ENCODE measurements at regions of chr2 and their contacts with region 1.

Region 1: DNA sequence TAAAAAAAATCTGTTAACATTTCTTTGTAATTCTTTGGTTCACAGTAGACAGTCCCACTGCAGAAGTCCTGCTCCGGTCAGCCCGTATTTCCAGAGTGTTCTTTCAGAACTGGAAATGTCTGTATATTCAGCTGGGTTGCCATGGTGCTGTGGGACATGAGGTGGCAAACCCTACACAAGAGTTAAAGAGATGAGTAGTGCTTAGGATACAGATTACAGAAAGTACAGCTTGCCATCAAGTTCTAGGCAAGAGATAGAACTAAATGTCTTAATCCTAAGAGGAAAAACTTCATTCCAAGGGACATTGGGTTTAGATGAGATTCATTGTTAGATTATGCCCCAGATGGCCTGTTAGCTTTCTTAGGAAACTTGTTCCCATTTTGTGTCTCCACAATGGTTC is 60.1 kb downstream of the FMNL2 start:
- DNase-seq: no peak

Region 2: DNA sequence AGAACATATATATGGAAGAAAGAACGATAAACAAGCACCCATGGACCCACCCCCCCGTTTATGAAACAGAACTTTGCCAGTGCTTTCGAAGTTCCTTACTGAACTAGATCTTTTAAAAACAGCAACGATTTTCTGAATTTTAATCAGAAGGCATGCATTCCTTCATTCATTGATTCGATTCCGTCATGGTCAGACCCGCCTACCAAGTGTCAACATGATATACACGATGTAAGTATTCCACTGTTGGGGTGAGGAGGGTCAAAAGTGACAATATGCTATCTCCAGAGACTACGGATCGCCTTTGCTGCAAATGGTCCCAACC is 60.5 kb before region 1 on chr2:
- intact Hi-C with region 1: no loop called
- DNase-seq: no peak

Region 3: GRCh38 chr2:152347076-152347475 is 48.0 kb before region 1 on chr2:
- intact Hi-C with region 1: loop called (anchors 10 kb)
- DNase-seq: no peak

Region 4: DNA sequence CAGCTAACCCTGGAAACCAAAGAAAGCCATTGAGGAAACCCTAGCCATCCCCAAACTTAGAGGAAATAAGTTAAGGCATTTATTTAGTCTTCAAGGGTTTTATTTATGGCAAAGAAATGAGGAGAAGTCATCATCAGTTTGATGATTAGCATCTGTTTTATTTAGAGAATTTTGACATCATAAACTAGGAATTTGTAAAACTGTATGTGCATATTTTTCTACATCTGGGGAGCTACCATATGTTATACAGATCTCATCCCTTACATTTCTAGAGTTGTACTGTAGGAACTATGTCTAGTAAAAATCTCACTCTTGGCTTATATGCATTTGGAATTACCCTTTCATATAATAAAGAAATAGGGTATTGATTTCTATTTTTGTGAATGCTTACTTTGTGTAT is 11.4 kb before region 1 on chr2:
- intact Hi-C with region 1: loop called in 1 of 2 experiments (anchors 1 kb)
- DNase-seq: no peak